Activated naive CD4-positive, alpha-beta T cell treated with anti-CD3 and anti-CD28 coated beads for 36 hours (primary cell): ENCODE measurements at regions of chr5 and their contacts with region 1.

Region 1: GRCh38 chr5:151463137-151464029 is 16.0 kb downstream of the SLC36A1 start:
- DNase-seq: no peak
- H3K4me3 Mint-ChIP-seq: no peak overlapping the region
- H3K27ac Mint-ChIP-seq: no peak overlapping the region
- H3K4me1 Mint-ChIP-seq: no peaks in the 10 kb centered on the region
- H3K27me3 Mint-ChIP-seq: no peaks in the 10 kb centered on the region

Region 2: DNA sequence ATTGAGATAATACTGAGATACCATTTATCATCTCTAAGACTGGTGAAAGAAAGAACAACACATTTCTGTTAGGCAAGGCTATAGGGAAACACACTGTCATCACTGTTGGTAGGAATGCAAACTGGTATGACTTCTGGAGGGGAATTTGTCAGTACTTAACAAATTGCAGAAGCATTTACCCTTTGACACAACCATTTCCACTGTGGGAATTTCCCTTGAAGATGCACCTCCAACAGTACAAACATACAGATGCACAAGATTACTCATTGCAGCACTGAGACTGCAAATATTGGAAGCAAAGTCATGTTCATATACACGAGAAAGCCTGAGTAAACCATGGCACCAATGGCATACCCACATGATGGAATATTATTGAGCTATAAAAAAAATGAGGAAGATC is 192.8 kb before region 1 on chr5:
- CTCF ChIA-PET with region 1: no interaction called
- intact Hi-C with region 1: no loop called
- DNase-seq: peak; percentile 52
- H3K4me3 Mint-ChIP-seq: no peak overlapping the region
- H3K27ac Mint-ChIP-seq: no peak overlapping the region
- H3K4me1 Mint-ChIP-seq: no peaks in the 10 kb centered on the region
- H3K27me3 Mint-ChIP-seq: no peaks in the 10 kb centered on the region

Region 3: GRCh38 chr5:151628112-151628823 is 164.9 kb after region 1 on chr5:
- CTCF ChIA-PET with region 1: interaction called, 10 read pairs
- intact Hi-C with region 1: no loop called
- DNase-seq: no peak
- H3K4me3 Mint-ChIP-seq: no peak overlapping the region
- H3K27ac Mint-ChIP-seq: no peak overlapping the region
- H3K4me1 Mint-ChIP-seq: no peaks in the 10 kb centered on the region
- H3K27me3 Mint-ChIP-seq: no peaks in the 10 kb centered on the region